ENCODE measurements at regions of chr12 and their contacts with region 1.

Region 1: GRCh38 chr12:6937481-6938297 is 5.9 kb upstream of the RNU7-1 start:
- DNase-seq: peak; percentile 96
- H3K4me3 Mint-ChIP-seq: peak overlapping the region; percentile 88
- H3K27ac Mint-ChIP-seq: peak overlapping the region; percentile 95
- H3K4me1 Mint-ChIP-seq: peaks cover 54% of the 10 kb centered on the region
- H3K27me3 Mint-ChIP-seq: no peaks in the 10 kb centered on the region

Region 2: GRCh38 chr12:6821591-6822425 is 115.9 kb before region 1 on chr12 and contains the start of gene GPR162:
- CTCF ChIA-PET with region 1: no interaction called
- POLR2A ChIA-PET with region 1: no interaction called
- DNase-seq: no peak
- H3K4me3 Mint-ChIP-seq: peak within 1 kb of the TSS; percentile 9
- H3K27ac Mint-ChIP-seq: peak within 1 kb of the TSS; percentile 12
- H3K4me1 Mint-ChIP-seq: peaks cover 16% of the 10 kb centered on the region
- H3K27me3 Mint-ChIP-seq: peaks cover 43% of the 10 kb centered on the region
- total RNA-seq, gene GPR162: not detected

Region 3: GRCh38 chr12:6867413-6868210 is 70.1 kb before region 1 on chr12 and contains the start of gene TPI1:
- CTCF ChIA-PET with region 1: interaction called, 20 read pairs
- POLR2A ChIA-PET with region 1: interaction called, 72 read pairs
- DNase-seq: peak; percentile 83
- H3K4me3 Mint-ChIP-seq: peak within 1 kb of the TSS; percentile 97
- H3K27ac Mint-ChIP-seq: peak within 1 kb of the TSS; percentile 95
- H3K4me1 Mint-ChIP-seq: peaks cover 54% of the 10 kb centered on the region
- H3K27me3 Mint-ChIP-seq: no peaks in the 10 kb centered on the region
- total RNA-seq, gene TPI1: 1,228 to 1,253 TPM

Region 4: GRCh38 chr12:6904280-6905278 is 33.1 kb before region 1 on chr12 and contains the start of gene LRRC23:
- CTCF ChIA-PET with region 1: interaction called, 10 read pairs
- POLR2A ChIA-PET with region 1: interaction called, 8 read pairs
- DNase-seq: peak; percentile 99
- H3K4me3 Mint-ChIP-seq: no peak within 1 kb of the TSS
- H3K27ac Mint-ChIP-seq: no peak within 1 kb of the TSS
- H3K4me1 Mint-ChIP-seq: peaks cover 2% of the 10 kb centered on the region
- H3K27me3 Mint-ChIP-seq: no peaks in the 10 kb centered on the region
- total RNA-seq, gene LRRC23: 5.7 to 6.1 TPM

Region 5: DNA sequence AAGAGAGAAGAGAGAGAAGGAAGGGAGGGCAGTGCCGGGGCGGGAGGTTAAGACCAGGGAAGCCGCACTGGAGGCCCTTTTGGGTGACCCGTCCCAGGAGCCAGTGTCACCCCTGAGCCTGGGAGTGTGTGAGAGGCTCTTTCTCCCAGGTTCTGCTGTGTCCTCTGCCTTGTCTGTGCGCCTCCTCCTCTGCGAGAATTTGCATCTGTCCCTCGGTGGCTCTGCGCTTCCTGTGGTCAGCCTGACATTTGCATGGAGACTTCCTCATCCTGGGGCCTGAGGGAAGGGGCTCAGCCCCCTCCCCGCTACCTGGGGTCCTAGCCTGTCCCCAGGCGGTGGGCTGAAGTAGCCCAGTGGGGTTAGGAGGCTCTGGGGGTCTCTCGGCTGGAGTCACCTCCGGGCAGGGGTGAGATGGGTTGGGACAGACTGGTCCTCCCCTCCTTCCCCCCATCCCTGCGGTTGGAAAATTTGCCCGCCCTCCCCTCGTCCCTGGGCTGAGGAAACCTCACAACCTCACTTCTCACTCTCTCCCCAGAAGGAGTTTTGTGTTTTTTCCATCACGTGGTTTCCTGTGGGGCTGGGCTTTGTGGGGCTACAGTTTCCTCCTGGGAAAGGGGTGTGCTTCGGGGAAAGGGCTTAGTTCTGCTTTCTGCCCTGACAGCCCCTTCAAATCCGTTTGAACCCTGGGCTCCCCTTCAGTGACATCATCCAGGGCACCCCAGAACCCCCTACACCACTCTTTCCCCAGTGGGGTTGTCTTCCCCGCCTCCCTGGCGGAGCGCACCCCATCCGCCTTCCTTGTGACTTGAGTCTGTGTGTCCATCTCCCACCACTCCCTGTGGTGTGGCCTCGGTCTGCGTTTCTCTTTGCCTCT is 16.0 kb after region 1 on chr12:
- CTCF ChIA-PET with region 1: interaction called, 465 read pairs
- POLR2A ChIA-PET with region 1: interaction called, 1,188 read pairs
- DNase-seq: peak; percentile 84
- H3K4me3 Mint-ChIP-seq: peak overlapping the region; percentile 94
- H3K27ac Mint-ChIP-seq: peak overlapping the region; percentile 99
- H3K4me1 Mint-ChIP-seq: peaks cover 81% of the 10 kb centered on the region
- H3K27me3 Mint-ChIP-seq: no peaks in the 10 kb centered on the region

Region 6: DNA sequence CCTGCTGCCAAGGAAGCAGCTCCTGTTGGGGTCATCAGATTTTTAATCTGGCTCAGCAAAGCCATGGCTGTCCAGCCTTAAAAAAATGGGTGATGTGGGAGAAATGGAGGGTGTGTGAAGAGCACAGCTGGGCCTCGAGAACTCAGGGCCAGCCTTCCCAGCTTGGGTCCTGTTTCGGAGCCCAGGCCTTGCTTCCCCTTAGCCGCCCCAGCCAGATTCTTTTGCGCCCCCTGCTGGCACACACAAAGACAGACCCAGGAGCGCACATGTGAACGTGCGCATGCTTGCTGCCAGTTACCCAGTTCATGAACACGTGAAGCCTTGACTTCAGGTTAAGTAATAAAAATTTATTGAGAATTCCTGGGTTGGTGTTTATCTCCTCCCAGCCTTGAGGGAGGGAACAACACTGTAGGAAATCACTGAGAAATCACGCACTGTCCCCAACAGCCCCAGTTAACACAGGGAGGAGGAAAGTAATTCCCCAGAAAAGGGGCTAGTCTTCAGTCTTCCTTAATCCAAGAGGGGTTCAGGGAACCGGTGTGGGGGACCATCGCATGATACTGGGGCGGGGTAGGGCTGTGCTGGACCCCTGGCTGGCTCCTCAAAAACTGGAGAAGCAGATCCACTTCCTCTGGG is 27.5 kb after region 1 on chr12:
- CTCF ChIA-PET with region 1: interaction called, 465 read pairs
- POLR2A ChIA-PET with region 1: interaction called, 1,188 read pairs
- DNase-seq: peak; percentile 89
- H3K4me3 Mint-ChIP-seq: no peak overlapping the region
- H3K27ac Mint-ChIP-seq: peak overlapping the region; percentile 83
- H3K4me1 Mint-ChIP-seq: peaks cover 79% of the 10 kb centered on the region
- H3K27me3 Mint-ChIP-seq: no peaks in the 10 kb centered on the region

Region 7: DNA sequence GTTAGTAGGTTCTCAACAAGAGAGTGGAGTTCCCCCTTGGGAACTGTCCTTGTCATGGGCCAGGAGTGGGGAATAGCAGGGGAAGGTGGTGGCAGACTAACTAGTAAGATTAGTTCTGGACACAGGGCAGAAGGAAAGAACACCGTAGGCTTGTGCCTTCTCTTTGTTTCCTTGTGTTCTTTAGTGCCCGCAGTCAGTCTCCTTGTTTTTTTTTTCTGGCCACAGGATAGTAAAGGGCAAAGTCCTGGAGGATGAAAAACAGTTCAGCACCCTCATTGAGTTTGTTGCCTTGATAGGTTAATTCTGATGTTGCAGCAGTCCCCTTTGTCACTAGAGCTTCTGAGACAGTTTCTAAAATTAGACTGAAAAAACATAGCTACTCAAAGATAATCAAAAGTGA is 260.2 kb after region 1 on chr12:
- CTCF ChIA-PET with region 1: no interaction called
- POLR2A ChIA-PET with region 1: no interaction called
- DNase-seq: no peak
- H3K4me3 Mint-ChIP-seq: no peak overlapping the region
- H3K27ac Mint-ChIP-seq: no peak overlapping the region
- H3K4me1 Mint-ChIP-seq: no peaks in the 10 kb centered on the region
- H3K27me3 Mint-ChIP-seq: no peaks in the 10 kb centered on the region

Region 8: DNA sequence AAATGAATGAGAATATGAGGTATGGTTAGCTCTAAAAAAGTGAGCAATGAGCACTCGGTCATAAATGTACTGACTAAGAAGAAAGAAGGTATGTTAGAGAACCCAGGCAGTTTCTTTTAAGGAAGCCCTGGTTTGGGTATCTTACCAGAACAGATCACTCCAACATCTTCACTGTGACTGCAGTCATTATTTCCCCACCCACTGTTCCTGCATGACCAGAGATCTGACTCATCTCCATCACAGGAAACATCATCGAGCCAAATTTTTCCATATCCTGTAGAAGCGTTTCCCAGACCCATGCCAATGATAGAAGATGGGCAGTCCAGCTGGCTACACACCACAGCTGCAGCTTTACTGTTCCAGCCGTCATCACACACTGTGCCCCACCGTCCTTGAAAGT is 458.3 kb after region 1 on chr12:
- CTCF ChIA-PET with region 1: no interaction called
- POLR2A ChIA-PET with region 1: no interaction called
- DNase-seq: no peak
- H3K4me3 Mint-ChIP-seq: no peak overlapping the region
- H3K27ac Mint-ChIP-seq: no peak overlapping the region
- H3K4me1 Mint-ChIP-seq: no peaks in the 10 kb centered on the region
- H3K27me3 Mint-ChIP-seq: peaks cover 18% of the 10 kb centered on the region

Measured in activated CD4-positive, alpha-beta memory T cell treated with anti-CD3 and anti-CD28 coated beads, Interleukin-2, amount 10 ng/mL, durations not matched to agents 7 days and 5 days (primary cell).